ENCODE measurements at regions of chr6 and their contacts with region 1.

Region 1: GRCh38 chr6:143223895-143224294 is 163.2 kb downstream of the AIG1 start:
- DNase-seq: no peak

Region 2: GRCh38 chr6:143060354-143060805 is 163.5 kb before region 1 on chr6:
- intact Hi-C with region 1: loop called (anchors 5 kb)
- DNase-seq: peak; percentile 92

Region 3: GRCh38 chr6:143187238-143187923 is 36.5 kb before region 1 on chr6:
- intact Hi-C with region 1: no loop called
- DNase-seq: no peak